Activated T-helper 1 cell treated with anti-CD3 and anti-CD28 coated beads, Interleukin-12 subunit alpha, Interleukin-12 subunit beta, Interleukin-2, Interleukin-4 antibody, amounts not matched to agents 30 ng/mL and 10 ng/mL and 1 ng/mL, durations not matched to agents 14 hours and 24 hours and 36 hours (primary cell): ENCODE measurements at regions of chr2 and their contacts with region 1.

Region 1: DNA sequence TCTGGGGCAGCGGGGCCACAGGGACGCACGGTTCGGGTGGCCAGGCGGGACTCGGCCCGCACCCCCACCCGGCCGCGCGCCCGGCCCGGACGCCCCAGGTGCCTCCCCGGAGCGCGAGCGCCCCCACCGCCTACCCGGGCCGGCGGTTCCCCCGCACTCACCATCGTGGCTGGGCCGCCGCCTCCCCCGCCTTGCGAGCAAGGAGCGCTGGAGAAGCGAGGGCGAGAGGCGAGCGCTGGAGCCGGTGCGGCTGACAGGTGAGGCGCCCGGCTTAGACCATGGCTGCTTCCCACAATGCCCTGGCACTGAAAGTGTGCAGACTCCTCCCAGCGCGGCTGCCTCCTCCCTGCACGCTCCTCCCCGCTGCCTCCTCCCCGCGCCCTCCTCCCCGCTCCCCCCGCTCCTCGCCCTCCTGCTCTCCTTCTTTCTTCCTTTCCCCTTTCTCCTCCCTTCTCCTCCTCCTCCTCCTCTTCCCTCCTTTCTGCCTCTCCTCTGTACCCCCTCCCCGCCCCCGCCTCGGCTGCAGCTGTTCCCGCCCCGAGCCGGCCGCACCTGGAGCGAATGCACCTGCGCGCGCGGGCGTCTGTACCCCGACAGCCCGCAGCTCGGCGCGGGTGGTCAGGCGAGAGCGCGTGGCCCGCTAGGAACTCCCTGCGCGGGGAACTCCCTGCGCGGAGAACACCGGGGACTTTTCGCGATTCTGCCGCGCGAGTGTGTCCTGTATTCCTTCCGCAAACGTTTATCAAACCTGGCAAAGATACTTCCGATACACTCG is at the start of gene AP1S3:
- DNase-seq: peak; percentile 63
- H3K4me3 Mint-ChIP-seq: peak within 1 kb of the TSS; percentile 92
- H3K27ac Mint-ChIP-seq: peak within 1 kb of the TSS; percentile 76
- H3K4me1 Mint-ChIP-seq: peaks cover 12% of the 10 kb centered on the region
- H3K27me3 Mint-ChIP-seq: peaks cover 7% of the 10 kb centered on the region
- total RNA-seq, gene AP1S3: 11.9 and 14.4 TPM in 2 replicates

Region 2: DNA sequence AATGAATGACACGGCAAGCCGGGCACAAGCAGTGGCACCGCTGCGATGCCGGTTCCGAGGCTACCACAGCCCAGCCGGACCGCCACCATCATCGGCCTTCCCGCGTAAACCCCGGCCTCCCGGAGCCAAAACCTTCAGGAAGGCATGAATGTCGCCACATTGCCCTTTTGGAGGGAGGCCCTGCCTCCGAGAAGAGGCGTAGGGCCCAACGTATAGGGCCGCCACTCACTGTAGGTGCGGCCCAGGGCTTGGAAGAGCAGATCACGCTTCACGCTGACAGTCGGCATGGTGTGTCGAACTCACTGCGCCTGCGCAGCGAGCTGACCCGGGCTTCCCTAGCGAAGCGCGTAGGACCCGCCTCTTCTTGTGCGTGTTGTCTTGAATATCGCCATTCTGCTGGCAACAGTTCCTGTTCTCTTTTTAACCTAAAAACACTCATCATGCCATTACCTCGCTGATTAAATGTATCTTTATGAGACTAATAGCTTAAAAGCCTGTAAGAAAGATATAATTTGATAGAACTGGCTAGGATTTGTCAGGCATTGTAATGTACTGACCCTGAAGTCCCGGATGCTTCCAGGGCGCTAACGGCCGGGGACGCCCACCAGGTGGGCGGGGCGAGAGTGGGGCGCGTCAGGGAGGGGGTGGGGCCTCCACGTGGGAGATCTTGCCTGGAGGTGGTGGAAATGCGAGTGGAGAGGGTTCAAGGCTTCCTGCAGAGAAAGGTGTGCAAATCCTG is 1181.5 kb before region 1 on chr2 and contains the start of gene FARSB:
- intact Hi-C with region 1: loop called (anchors 5 kb)
- DNase-seq: peak; percentile 90
- H3K4me3 Mint-ChIP-seq: peak within 1 kb of the TSS; percentile 95
- H3K27ac Mint-ChIP-seq: peak within 1 kb of the TSS; percentile 87
- H3K4me1 Mint-ChIP-seq: peaks cover 36% of the 10 kb centered on the region
- H3K27me3 Mint-ChIP-seq: no peaks in the 10 kb centered on the region
- total RNA-seq, gene FARSB: 48.9 and 53.4 TPM in 2 replicates

Region 3: GRCh38 chr2:223727562-223727961 is 109.9 kb before region 1 on chr2:
- intact Hi-C with region 1: loop called (anchors 1 kb)
- DNase-seq: peak; percentile 1
- H3K4me3 Mint-ChIP-seq: no peak overlapping the region
- H3K27ac Mint-ChIP-seq: no peak overlapping the region
- H3K4me1 Mint-ChIP-seq: no peaks in the 10 kb centered on the region
- H3K27me3 Mint-ChIP-seq: no peaks in the 10 kb centered on the region

Region 4: GRCh38 chr2:223760838-223761502 is 76.5 kb before region 1 on chr2:
- intact Hi-C with region 1: loop called (anchors 5 kb)
- DNase-seq: peak; percentile 55
- H3K4me3 Mint-ChIP-seq: no peak overlapping the region
- H3K27ac Mint-ChIP-seq: peak overlapping the region; percentile 40
- H3K4me1 Mint-ChIP-seq: peaks cover 24% of the 10 kb centered on the region
- H3K27me3 Mint-ChIP-seq: no peaks in the 10 kb centered on the region